ENCODE measurements at regions of chr18 and their contacts with region 1.

Region 1: GRCh38 chr18:34380326-34380725 is 155.6 kb upstream of the NOL4 start:
- DNase-seq: no peak
- ATAC-seq: no peak
- H3K4me3 ChIP-seq: no peak overlapping the region
- H3K27ac ChIP-seq: no peak overlapping the region
- H3K4me1 ChIP-seq: no peaks in the 10 kb centered on the region
- H3K27me3 ChIP-seq: no peaks in the 10 kb centered on the region
- CTCF ChIP-seq: no peak
- POLR2A ChIP-seq: no peak

Region 2: GRCh38 chr18:34097312-34097711 is 283.0 kb before region 1 on chr18:
- intact Hi-C with region 1: no loop called
- DNase-seq: no peak
- ATAC-seq: no peak
- H3K4me3 ChIP-seq: no peak overlapping the region
- H3K27ac ChIP-seq: no peak overlapping the region
- H3K4me1 ChIP-seq: no peaks in the 10 kb centered on the region
- H3K27me3 ChIP-seq: no peaks in the 10 kb centered on the region
- CTCF ChIP-seq: no peak
- POLR2A ChIP-seq: no peak

Region 3: DNA sequence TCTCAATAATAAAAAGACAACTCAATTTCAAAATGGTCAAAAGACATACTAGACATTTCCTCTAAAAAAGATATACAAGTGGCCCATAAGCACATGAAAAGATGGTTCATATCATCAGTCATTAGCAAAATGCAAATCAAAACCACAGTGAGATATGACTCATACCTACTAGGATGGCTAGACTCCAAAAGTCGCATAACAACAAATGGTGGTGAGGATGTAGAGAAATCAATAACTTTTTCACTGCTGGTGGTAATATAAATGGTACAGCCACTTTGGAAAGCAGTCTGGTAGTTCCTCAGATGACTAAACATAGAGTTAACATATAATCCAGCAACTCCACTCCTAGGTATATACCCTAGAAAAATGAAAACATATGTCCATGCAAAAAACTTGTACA is 86.7 kb after region 1 on chr18:
- intact Hi-C with region 1: loop called (anchors 10 kb)
- DNase-seq: no peak
- ATAC-seq: no peak
- H3K4me3 ChIP-seq: no peak overlapping the region
- H3K27ac ChIP-seq: no peak overlapping the region
- H3K4me1 ChIP-seq: no peaks in the 10 kb centered on the region
- H3K27me3 ChIP-seq: no peaks in the 10 kb centered on the region
- CTCF ChIP-seq: no peak
- POLR2A ChIP-seq: no peak

Measured in body of pancreas (tissue), 4 donors.